ENCODE measurements at regions of chr16 and their contacts with region 1.

Region 1: GRCh38 chr16:5071681-5072333 is at the start of gene ALG1:
- DNase-seq: peak; percentile 87 to 89 (median 87)
- H3K4me3 ChIP-seq: peak within 1 kb of the TSS; percentile 77 to 79
- H3K4me3 Mint-ChIP-seq: peak within 1 kb of the TSS; percentile 93 to 97 (median 94)
- H3K27ac ChIP-seq: peak within 1 kb of the TSS; percentile 76
- H3K27ac Mint-ChIP-seq: peak within 1 kb of the TSS; percentile 91 to 98 (median 96)
- H3K4me1 ChIP-seq: peaks cover 22% of the 10 kb centered on the region
- H3K4me1 Mint-ChIP-seq: peaks cover 21 to 35% (median 28%) of the 10 kb centered on the region in 4 donors
- H3K27me3 ChIP-seq: no peaks in the 10 kb centered on the region
- H3K27me3 Mint-ChIP-seq: no peaks in the 10 kb centered on the region
- total RNA-seq, gene ALG1: 23.5 to 28.1 TPM

Region 2: DNA sequence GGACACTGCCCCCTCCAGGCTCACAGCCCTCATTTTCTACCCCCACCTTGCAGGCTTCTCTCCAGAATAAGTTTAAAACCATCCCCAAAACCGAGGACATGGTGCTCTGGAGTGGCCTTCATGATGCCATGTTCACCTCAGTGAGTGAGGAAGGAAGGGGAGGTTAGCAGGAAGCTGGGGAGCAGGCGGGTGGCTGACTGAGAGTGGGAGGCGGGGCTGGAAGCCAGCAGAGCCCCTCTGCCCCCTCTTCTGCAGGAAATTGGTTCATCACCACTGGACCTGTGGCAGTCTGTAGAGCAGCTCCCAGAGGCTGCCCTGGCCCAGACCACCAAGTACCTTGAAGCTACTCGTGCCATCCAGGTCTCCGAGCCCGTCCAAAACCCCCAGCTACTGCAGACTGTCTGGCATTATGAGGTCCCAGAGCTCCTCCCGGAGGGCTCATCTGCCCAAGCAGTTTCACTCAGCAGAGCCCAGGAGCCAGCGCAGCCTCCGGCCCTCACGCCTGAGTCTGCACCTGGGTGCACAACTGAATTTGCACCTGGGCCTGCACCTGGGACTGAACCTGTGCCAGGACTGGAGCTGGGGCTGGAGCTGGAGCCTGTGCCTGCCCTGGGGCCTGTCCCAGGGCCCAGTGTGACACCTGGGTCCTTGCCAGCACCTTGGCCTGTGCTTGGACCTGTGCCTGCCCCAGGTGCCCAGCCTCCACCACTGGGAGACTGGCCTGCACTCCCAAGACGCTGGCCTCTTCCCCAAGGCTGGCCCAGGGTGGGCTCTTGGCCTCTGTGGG is 496.7 kb before region 1 on chr16:
- CTCF ChIA-PET with region 1: no interaction called
- POLR2A ChIA-PET with region 1: no interaction called
- intact Hi-C with region 1: no loop called
- DNase-seq: no peak
- H3K4me3 ChIP-seq: no peak overlapping the region
- H3K4me3 Mint-ChIP-seq: no peak overlapping the region
- H3K27ac ChIP-seq: no peak overlapping the region
- H3K27ac Mint-ChIP-seq: no peak overlapping the region
- H3K4me1 ChIP-seq: no peaks in the 10 kb centered on the region
- H3K4me1 Mint-ChIP-seq: no peaks in the 10 kb centered on the region
- H3K27me3 ChIP-seq: no peaks in the 10 kb centered on the region
- H3K27me3 Mint-ChIP-seq: no peaks in the 10 kb centered on the region

Region 3: GRCh38 chr16:5033256-5034169 is 38.3 kb before region 1 on chr16 and contains the start of gene NAGPA:
- CTCF ChIA-PET with region 1: interaction called, 4 read pairs
- POLR2A ChIA-PET with region 1: interaction called, 22 read pairs
- intact Hi-C with region 1: loop called (anchors 1 kb)
- DNase-seq: peak; percentile 86 to 88 (median 87)
- H3K4me3 ChIP-seq: peak within 1 kb of the TSS; percentile 26 to 86
- H3K4me3 Mint-ChIP-seq: peak within 1 kb of the TSS; percentile 85 to 93 (median 90)
- H3K27ac ChIP-seq: peak within 1 kb of the TSS; percentile 50
- H3K27ac Mint-ChIP-seq: peak within 1 kb of the TSS; percentile 88 to 96 (median 91)
- H3K4me1 ChIP-seq: peaks cover 16% of the 10 kb centered on the region
- H3K4me1 Mint-ChIP-seq: peaks cover 12 to 32% (median 15%) of the 10 kb centered on the region in 4 donors
- H3K27me3 ChIP-seq: no peaks in the 10 kb centered on the region
- H3K27me3 Mint-ChIP-seq: no peaks in the 10 kb centered on the region
- total RNA-seq, gene NAGPA: 30.7 to 33.2 TPM

Region 4: GRCh38 chr16:5045499-5046115 is 26.2 kb before region 1 on chr16:
- CTCF ChIA-PET with region 1: no interaction called
- POLR2A ChIA-PET with region 1: no interaction called
- intact Hi-C with region 1: no loop called
- DNase-seq: no peak
- H3K4me3 ChIP-seq: no peak overlapping the region
- H3K4me3 Mint-ChIP-seq: no peak overlapping the region
- H3K27ac ChIP-seq: no peak overlapping the region
- H3K27ac Mint-ChIP-seq: no peak overlapping the region
- H3K4me1 ChIP-seq: no peaks in the 10 kb centered on the region
- H3K4me1 Mint-ChIP-seq: no peaks in the 10 kb centered on the region
- H3K27me3 ChIP-seq: no peaks in the 10 kb centered on the region
- H3K27me3 Mint-ChIP-seq: peaks cover 0 to 5% of the 10 kb centered on the region in 2 donors

Region 5: DNA sequence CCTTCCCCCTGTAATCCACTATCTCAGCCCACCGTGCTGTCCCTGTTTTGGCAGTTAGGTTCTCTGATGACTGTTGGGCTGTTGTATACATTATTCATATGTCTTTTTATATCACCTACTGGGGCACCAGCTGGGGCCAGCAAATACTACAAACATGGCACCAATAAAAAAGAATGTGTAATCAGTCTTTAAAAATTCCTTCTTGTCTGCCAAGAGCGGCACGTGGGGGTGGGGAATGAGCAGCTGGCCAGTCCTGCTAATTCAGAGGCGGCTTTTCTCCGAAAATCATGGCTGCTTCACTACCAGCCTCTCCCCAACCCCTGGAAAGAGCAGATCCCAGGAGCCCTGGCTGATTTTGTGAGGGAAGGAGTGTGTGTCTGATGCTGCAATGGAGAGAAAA is 103.5 kb after region 1 on chr16:
- CTCF ChIA-PET with region 1: no interaction called
- POLR2A ChIA-PET with region 1: no interaction called
- intact Hi-C with region 1: no loop called
- DNase-seq: no peak
- H3K4me3 ChIP-seq: no peak overlapping the region
- H3K4me3 Mint-ChIP-seq: no peak overlapping the region
- H3K27ac ChIP-seq: no peak overlapping the region
- H3K27ac Mint-ChIP-seq: no peak overlapping the region
- H3K4me1 ChIP-seq: no peaks in the 10 kb centered on the region
- H3K4me1 Mint-ChIP-seq: no peaks in the 10 kb centered on the region
- H3K27me3 ChIP-seq: no peaks in the 10 kb centered on the region
- H3K27me3 Mint-ChIP-seq: peaks cover 17 to 23% of the 10 kb centered on the region in 2 donors

Region 6: GRCh38 chr16:5257462-5257861 is 185.7 kb after region 1 on chr16:
- CTCF ChIA-PET with region 1: no interaction called
- POLR2A ChIA-PET with region 1: no interaction called
- intact Hi-C with region 1: no loop called
- DNase-seq: no peak
- H3K4me3 ChIP-seq: no peak overlapping the region
- H3K4me3 Mint-ChIP-seq: no peak overlapping the region
- H3K27ac ChIP-seq: no peak overlapping the region
- H3K27ac Mint-ChIP-seq: no peak overlapping the region
- H3K4me1 ChIP-seq: no peaks in the 10 kb centered on the region
- H3K4me1 Mint-ChIP-seq: no peaks in the 10 kb centered on the region
- H3K27me3 ChIP-seq: no peaks in the 10 kb centered on the region
- H3K27me3 Mint-ChIP-seq: peaks cover 9 to 14% of the 10 kb centered on the region in 2 donors